ENCODE measurements at regions of chr3 and their contacts with region 1.

Region 1: GRCh38 chr3:33113772-33114621 is at the start of gene CRTAP:
- DNase-seq: peak; percentile 98
- H3K4me3 ChIP-seq: peak within 1 kb of the TSS; percentile 69 to 91 (median 80)
- H3K27ac ChIP-seq: peak within 1 kb of the TSS; percentile 94 to 99 (median 97)
- H3K4me1 ChIP-seq: peaks cover 8 to 56% (median 49%) of the 10 kb centered on the region in 4 donors
- H3K27me3 ChIP-seq: no peaks in the 10 kb centered on the region
- CTCF ChIP-seq: peak in 2 of 3 experiments; percentile 7
- EP300 ChIP-seq: no peak
- POLR2A ChIP-seq: no peak
- total RNA-seq, gene CRTAP: 187 to 282 (median 237) TPM

Region 2: DNA sequence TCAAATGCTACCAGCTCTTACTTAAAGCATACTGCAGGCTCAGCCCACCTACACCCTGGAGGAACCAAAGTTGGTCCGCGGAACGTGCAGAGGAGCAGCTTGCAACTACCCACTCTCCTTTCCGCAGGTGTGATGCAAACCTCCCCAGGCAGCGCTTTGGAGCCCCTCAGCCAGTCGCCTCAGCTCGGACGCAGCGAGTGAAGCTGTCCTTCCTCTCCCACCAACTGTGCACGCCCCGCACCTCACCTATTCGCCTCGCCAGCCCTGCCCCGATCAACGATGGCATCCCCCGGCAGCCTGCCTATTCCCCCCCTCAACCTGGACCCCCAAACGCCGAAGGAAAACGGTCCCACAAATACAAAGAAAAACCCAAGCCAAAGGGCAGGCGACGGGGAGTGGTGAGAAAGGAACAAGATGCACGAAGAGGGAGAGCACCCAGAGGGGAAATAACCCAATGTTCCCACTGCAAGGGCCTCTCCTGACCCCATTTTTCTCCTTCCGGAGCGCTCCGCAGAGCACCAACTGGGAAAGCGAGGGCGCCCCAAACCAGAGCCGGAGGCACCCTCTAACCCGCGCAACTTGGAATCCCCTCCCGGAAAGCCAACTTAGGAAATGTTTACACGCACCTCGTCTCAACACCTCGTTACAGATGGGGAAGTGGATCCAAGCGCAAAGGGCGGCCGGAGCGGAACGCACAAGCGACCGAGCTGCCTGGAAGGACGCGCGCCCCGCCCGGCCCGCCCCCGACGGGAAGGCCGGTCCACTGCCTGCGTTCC is 17.7 kb before region 1 on chr3:
- intact Hi-C with region 1: loop called (anchors 2 kb)
- DNase-seq: no peak
- H3K4me3 ChIP-seq: peak overlapping the region; percentile 79 to 94 (median 88)
- H3K27ac ChIP-seq: peak overlapping the region; percentile 94 to 98 (median 96)
- H3K4me1 ChIP-seq: peaks cover 9 to 38% (median 21%) of the 10 kb centered on the region in 4 donors
- H3K27me3 ChIP-seq: no peaks in the 10 kb centered on the region
- CTCF ChIP-seq: no peak
- EP300 ChIP-seq: no peak
- POLR2A ChIP-seq: no peak

Region 3: GRCh38 chr3:33250712-33251111 is 136.7 kb after region 1 on chr3:
- intact Hi-C with region 1: no loop called
- DNase-seq: no peak
- H3K4me3 ChIP-seq: no peak overlapping the region
- H3K27ac ChIP-seq: no peak overlapping the region
- H3K4me1 ChIP-seq: no peaks in the 10 kb centered on the region
- H3K27me3 ChIP-seq: no peaks in the 10 kb centered on the region
- CTCF ChIP-seq: no peak
- EP300 ChIP-seq: no peak
- POLR2A ChIP-seq: no peak